ENCODE measurements at regions of chr1 and their contacts with region 1.

Region 1: DNA sequence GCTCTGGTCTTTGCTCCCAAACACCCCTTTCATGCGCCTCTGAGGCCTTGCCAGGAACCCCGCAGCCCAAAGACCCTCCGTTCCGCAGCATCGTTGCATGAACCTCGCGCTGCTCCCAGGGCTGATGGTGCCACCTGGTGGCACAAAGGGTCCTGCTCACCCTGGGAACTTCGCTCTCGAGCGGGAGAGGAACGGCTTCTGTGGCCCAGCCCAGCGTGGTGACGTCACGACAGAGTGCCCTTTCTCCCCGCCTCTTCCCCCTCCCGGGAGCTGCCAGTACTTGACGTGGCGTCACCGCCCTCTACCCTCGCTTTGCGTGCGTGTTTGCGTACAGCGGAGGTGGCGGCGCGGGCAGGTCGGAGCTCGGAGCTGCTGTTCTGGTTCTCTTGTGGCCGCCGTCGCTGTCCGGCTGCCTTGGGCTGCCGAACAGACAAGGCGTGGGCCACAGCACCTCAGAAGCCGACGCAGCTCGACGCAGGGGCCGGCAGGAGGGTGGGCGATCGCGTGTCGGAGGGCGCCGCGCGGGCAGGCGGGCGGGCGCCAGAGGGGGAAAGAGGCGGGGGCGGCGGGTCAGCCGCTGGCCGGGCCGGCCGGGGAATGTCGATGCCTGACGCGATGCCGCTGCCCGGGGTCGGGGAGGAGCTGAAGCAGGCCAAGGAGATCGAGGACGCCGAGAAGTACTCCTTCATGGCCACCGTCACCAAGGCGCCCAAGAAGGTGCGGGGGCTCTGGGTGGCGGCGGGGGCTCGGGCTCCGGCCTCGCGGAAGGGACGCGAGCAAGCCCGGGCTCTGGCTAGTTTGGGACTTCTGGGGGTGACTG is at the start of gene AHCYL1:
- DNase-seq: peak; percentile 99
- ATAC-seq: peak; percentile 96
- H3K4me3 ChIP-seq: peak within 1 kb of the TSS; percentile 63
- H3K27ac ChIP-seq: peak within 1 kb of the TSS; percentile 91
- H3K4me1 ChIP-seq: peaks cover 18% of the 10 kb centered on the region
- H3K27me3 ChIP-seq: no peaks in the 10 kb centered on the region
- CTCF ChIP-seq: peak; percentile 99
- POLR2A ChIP-seq: peak; percentile 97
- RAD21 ChIP-seq: peak; percentile 100
- total RNA-seq, gene AHCYL1: 73.9 and 76.0 TPM in 2 replicates

Region 2: DNA sequence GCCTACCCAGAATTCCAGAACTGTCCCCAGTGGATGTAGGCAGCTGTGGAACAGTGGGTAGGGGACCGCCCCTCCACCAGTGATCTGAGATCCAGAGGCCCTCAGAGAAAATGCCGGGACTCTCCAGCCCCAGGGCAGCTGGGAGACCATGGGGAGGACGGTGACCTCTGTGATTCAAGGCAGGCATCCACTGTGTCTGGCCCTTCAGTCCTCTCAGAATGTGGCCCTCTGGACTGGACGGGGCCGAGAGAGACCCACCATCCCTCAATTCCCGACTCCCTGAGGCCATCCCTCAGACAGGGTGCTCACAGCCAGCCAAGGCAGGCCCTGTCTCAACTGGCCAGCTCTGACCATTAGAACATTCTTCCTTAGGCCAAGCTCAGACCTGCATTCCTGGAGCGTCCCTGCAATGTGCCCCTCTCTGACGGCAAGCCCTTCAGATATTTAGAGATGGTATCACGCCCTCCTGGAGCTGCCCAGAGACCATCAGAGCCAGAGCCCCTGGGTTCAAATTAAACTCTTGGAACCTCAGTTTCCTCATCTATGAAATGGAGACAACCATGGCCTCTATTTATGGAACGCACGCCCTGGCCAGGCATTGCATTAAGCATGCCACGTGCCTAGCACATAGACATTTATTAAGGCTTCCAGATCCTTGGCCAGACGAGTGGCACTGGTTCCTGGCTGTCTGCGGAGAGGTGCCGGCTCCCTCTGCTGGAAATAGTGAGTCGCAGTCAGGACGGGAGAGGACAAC is 211.3 kb before region 1 on chr1:
- CTCF ChIA-PET with region 1: interaction called, 69 read pairs
- POLR2A ChIA-PET with region 1: no interaction called
- dilution Hi-C with region 1: no loop called
- in situ Hi-C with region 1: loop called (anchors 5 kb)
- intact Hi-C with region 1: loop called (anchors 1 kb)
- DNase-seq: peak; percentile 85
- ATAC-seq: peak; percentile 85
- H3K4me3 ChIP-seq: no peak overlapping the region
- H3K27ac ChIP-seq: no peak overlapping the region
- H3K4me1 ChIP-seq: peaks cover 24% of the 10 kb centered on the region
- H3K27me3 ChIP-seq: no peaks in the 10 kb centered on the region
- CTCF ChIP-seq: peak; percentile 99
- POLR2A ChIP-seq: peak; percentile 66
- RAD21 ChIP-seq: peak; percentile 100

Region 3: GRCh38 chr1:109877320-109877771 is 107.3 kb before region 1 on chr1:
- CTCF ChIA-PET with region 1: interaction called, 3 read pairs
- POLR2A ChIA-PET with region 1: no interaction called
- dilution Hi-C with region 1: no loop called
- in situ Hi-C with region 1: no loop called
- intact Hi-C with region 1: loop called (anchors 2 kb)
- DNase-seq: peak; percentile 94
- ATAC-seq: peak; percentile 92
- H3K4me3 ChIP-seq: no peak overlapping the region
- H3K27ac ChIP-seq: peak overlapping the region; percentile 94
- H3K4me1 ChIP-seq: peaks cover 32% of the 10 kb centered on the region
- H3K27me3 ChIP-seq: no peaks in the 10 kb centered on the region
- CTCF ChIP-seq: peak; percentile 35; the same call in 1 of the 2 replicates
- POLR2A ChIP-seq: no peak
- RAD21 ChIP-seq: peak; percentile 48

Region 4: DNA sequence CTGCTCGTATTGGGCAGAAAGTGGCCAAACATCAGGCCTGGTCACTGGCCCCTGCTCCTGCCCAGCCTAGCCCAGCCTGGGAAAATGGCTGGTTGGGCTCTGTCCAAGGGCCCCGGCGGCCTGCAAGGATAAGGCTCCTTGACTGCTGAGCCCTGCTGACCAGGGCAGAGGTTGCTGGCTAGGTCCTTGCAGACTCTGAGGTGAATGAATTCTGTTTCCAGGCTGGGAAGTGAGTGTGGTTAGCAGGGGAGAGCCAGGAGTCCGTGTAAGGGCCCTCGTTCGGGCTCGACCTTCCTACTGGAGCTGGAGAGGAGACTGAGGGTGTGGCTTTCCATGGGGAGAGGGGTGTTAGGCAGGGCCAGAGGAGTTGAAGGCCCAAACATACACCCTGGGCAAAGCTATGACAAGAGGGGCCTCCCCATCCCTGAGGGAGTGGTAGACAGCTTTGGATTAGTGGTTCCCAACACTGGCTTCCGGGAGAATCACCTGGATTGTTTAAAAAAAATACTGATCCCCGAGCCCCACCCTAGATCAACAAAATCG is 53.4 kb before region 1 on chr1:
- CTCF ChIA-PET with region 1: interaction called, 4 read pairs
- POLR2A ChIA-PET with region 1: no interaction called
- dilution Hi-C with region 1: no loop called
- in situ Hi-C with region 1: no loop called
- intact Hi-C with region 1: loop called (anchors 5 kb)
- DNase-seq: peak; percentile 77
- ATAC-seq: peak; percentile 74
- H3K4me3 ChIP-seq: no peak overlapping the region
- H3K27ac ChIP-seq: peak overlapping the region; percentile 16; the same call in 1 of the 2 replicates
- H3K4me1 ChIP-seq: peaks cover 23% of the 10 kb centered on the region
- H3K27me3 ChIP-seq: no peaks in the 10 kb centered on the region
- CTCF ChIP-seq: no peak
- POLR2A ChIP-seq: no peak
- RAD21 ChIP-seq: no peak

Region 5: DNA sequence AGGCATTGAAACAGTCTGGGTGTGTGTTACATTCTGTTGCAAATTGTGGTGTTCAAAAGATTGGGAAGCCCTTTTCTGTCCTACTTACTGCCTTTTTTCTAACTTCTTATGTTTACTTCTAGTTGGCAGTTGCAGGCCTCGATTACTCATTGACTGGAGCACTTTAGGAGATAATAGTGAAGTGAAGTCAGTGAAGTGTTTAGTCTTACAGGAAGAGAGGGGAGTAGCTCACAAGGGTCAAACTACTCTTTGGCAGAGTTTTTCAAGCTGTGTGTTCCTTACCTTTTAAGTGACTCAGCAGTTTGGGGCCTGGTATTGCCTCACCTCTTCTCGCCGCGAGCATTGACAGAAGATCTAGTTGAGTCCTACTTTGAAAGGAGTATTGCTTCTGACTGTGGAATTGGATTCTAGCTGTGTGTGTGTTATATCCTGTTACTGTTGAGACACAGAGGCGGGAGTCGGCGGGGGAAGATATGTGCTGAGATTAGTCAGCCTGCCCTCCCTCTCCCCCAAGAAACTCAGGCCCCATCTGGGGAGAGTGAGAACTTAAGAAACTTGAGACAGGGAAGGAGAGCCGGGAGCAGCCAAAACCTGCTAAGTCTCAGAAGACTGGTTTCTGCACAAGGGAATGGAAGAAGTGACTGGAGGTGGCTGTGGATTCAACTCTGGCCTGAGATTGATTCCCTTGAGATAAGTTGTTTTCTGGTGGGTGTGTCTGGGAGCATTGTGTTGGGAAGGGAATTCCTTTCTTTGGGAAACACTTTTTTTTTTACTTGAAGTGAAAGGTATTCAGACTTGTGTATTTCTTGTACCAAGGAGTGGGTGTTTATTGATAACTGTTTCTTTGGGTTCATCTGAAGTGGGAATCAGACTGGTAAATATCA is 19.3 kb after region 1 on chr1:
- CTCF ChIA-PET with region 1: interaction called, 5 read pairs
- POLR2A ChIA-PET with region 1: no interaction called
- dilution Hi-C with region 1: no loop called
- in situ Hi-C with region 1: no loop called
- intact Hi-C with region 1: loop called (anchors 1 kb)
- DNase-seq: peak; percentile 99
- ATAC-seq: peak; percentile 90
- H3K4me3 ChIP-seq: peak overlapping the region; percentile 29; the same call in 1 of the 2 replicates
- H3K27ac ChIP-seq: peak overlapping the region; percentile 50
- H3K4me1 ChIP-seq: peaks cover 17% of the 10 kb centered on the region
- H3K27me3 ChIP-seq: no peaks in the 10 kb centered on the region
- CTCF ChIP-seq: no peak
- POLR2A ChIP-seq: peak; percentile 67
- RAD21 ChIP-seq: no peak

Region 6: DNA sequence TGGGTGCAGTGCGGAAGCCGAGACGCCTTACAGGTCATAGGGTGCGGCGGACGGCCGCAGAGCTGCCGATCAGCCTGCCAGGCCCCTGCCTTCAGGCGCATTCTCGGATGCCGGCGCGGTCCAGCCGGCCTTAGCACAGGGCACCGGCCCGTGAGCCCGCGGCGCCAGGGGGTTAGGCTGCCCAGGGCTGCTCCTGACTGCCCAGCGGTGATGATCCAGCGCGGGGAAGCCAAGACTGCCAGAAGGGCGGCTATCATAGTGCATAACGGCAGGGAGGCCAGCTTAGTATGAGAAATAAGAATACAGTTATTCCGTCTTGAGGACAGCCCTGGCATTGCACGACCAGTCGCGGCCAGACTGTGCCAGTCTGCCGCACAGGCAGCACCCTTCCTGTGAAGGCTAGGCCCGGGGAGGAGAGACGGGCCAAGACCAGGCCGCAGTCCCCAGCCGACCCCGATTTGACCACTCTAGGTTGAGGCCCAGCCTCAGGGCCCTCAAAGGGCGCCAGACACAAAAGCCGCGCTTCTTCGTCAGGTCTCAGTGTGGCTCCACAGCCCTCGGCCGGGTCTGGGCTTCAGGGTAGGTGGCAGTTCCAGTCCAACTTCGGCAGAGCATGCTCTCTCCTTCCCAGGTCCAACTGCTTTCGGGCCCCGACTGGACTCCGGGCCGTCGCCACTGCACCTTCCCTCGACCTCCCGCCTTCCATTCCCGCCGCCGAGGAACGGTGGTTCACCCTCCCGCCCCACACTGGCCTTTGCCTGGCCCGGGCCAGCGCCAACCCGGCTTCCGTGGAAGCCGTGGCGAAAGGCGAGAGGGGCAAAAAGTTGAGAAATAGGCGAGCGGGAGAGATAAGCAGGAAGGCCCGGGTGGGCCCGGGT is 85.0 kb after region 1 on chr1:
- CTCF ChIA-PET with region 1: no interaction called
- POLR2A ChIA-PET with region 1: no interaction called
- dilution Hi-C with region 1: no loop called
- in situ Hi-C with region 1: no loop called
- intact Hi-C with region 1: no loop called
- DNase-seq: no peak
- ATAC-seq: peak; percentile 7; the same call in 1 of the 2 replicates
- H3K4me3 ChIP-seq: no peak overlapping the region
- H3K27ac ChIP-seq: no peak overlapping the region
- H3K4me1 ChIP-seq: no peaks in the 10 kb centered on the region; the same call in 1 of the 2 replicates
- H3K27me3 ChIP-seq: peaks cover 83% of the 10 kb centered on the region
- CTCF ChIP-seq: no peak
- POLR2A ChIP-seq: no peak
- RAD21 ChIP-seq: no peak

Region 7: GRCh38 chr1:110548381-110548780 is 563.7 kb after region 1 on chr1:
- CTCF ChIA-PET with region 1: no interaction called
- POLR2A ChIA-PET with region 1: no interaction called
- dilution Hi-C with region 1: no loop called
- in situ Hi-C with region 1: no loop called
- intact Hi-C with region 1: no loop called
- DNase-seq: peak; percentile 8
- ATAC-seq: peak; percentile 49
- H3K4me3 ChIP-seq: no peak overlapping the region
- H3K27ac ChIP-seq: no peak overlapping the region
- H3K4me1 ChIP-seq: no peaks in the 10 kb centered on the region
- H3K27me3 ChIP-seq: peaks cover 17% of the 10 kb centered on the region
- CTCF ChIP-seq: peak; percentile 30; the same call in 1 of the 2 replicates
- POLR2A ChIP-seq: no peak
- RAD21 ChIP-seq: no peak

Measured in IMR-90 (cell line).